ENCODE measurements at regions of chr18 and their contacts with region 1.

Region 1: DNA sequence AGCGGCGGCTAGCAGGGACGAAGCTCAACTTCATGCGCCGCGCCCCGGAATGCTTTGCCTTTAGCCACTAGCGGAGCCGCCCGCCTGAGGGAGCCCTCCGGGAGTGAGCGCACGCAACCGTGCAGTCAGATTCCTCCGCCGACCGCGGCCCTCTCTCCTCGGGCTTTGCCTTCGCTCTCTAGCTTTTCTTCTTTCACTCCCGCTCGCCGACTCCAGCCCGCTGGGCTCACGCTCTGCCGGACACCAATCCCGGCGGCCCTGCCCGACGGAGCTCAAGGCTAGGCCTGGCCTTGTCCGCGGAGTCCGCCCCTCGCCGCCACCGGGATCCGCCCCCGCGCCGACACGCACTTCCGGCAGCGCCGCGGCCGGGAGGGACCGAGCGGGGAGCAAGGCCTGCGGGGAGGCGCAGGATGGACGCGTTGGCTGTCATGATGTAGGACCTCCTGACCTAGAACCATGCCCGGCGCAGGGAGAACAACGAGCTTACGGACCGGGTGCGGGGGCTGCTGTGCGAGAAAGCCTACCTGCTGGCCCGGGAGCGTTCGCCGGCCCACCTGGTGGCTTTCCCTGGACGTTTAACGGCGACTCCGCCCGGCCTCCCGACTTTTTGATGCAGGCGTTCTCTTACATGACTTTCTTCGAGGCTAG is 40.8 kb upstream of the AKAIN1 start:
- DNase-seq: peak; percentile 67 to 86
- H3K4me3 ChIP-seq: peak overlapping the region; percentile 98
- H3K27ac ChIP-seq: peak overlapping the region; percentile 92
- H3K4me1 ChIP-seq: peaks cover 9% of the 10 kb centered on the region; the same call in 1 of the 2 replicates
- H3K27me3 ChIP-seq: peaks cover 11% of the 10 kb centered on the region; the same call in 1 of the 2 replicates
- CTCF ChIP-seq: no peak

Region 2: DNA sequence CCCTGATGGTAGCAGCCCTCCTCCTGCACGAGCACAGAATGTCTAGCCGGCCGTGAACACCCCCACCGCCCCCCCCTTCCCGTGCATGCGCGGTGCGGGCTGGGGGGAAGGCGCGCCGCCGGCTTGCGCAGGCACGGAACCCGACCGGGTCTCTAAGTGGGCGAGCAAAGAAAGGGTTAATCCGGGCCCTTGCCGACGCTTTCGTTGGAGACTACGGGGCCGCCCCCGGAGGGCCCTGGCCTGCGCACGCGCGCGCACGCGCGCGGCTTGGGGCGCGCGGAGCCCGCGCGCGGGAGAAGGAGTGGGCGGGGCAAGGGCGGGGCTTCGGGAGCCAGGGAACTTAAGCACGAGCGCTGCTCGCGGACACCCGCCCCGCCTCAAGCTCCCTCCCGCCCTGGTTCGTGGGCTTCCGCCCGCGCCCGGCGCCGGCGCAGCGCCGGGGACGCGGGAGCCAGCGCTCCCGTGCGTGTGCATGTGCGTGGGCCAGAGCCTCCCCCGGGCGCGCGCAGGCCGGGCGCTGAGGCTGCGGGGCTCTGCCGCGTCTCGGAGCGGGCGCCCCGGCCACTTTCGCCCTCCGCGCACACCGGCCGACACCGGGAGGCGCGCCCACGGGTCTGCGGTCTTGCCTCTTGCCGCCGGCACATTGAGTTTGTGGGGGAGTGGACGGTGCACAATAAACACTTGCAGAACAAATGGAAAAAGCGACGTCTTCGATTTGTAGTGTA is 58.3 kb after region 1 on chr18:
- CTCF ChIA-PET with region 1: no interaction called
- POLR2A ChIA-PET with region 1: interaction called, 3 read pairs
- intact Hi-C with region 1: loop called (anchors 1 kb)
- DNase-seq: peak; percentile 82 to 94
- H3K4me3 ChIP-seq: peak overlapping the region; percentile 72
- H3K27ac ChIP-seq: peak overlapping the region; percentile 51
- H3K4me1 ChIP-seq: peaks cover 9% of the 10 kb centered on the region
- H3K27me3 ChIP-seq: peaks cover 24% of the 10 kb centered on the region
- CTCF ChIP-seq: no peak

Measured in PC-9 (cell line).